Right ventricle myocardium inferior (tissue), 1 donor: ENCODE measurements at regions of chr1 and their contacts with region 1.

Region 1: DNA sequence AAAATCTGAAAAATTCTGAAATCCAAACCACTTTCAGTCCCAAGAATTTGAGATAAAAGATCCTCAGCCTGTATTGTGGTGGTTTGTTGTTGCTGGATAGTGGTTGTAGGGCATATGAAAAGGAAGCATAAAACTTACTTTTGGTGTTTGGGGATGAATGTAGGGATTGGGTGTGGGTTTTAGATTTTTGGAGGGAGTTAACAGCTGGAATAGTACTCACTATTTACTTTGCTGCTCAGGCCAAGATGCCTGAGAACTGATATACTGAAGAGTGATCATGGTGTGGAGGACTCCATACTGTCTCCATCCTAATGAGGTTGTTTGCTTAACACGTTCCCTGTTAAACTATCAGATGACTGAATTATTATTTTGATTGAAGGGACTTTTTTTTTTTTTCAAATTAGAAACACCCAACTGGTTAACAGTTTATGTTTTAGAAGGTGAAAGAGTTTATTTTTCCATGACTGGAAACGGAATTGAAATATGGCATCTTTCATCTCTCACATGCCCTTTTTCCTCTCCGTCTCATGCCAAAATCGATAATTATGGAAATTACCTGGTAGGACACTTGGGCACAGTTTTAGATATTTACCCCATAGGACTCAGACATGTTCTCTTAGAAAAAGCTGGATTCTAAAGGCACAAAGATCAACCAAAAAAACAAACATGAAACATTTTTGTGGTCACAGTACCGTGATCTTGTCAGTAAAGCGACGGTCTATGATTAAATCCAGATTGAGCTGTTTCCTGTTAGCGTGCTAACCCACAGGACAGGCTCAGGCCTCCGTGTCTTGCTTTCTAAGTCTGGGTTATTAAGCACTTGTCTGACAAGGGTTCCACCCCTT is 37.3 kb downstream of the RGL1 start:
- DNase-seq: no peak
- ATAC-seq: peak; percentile 86

Region 2: DNA sequence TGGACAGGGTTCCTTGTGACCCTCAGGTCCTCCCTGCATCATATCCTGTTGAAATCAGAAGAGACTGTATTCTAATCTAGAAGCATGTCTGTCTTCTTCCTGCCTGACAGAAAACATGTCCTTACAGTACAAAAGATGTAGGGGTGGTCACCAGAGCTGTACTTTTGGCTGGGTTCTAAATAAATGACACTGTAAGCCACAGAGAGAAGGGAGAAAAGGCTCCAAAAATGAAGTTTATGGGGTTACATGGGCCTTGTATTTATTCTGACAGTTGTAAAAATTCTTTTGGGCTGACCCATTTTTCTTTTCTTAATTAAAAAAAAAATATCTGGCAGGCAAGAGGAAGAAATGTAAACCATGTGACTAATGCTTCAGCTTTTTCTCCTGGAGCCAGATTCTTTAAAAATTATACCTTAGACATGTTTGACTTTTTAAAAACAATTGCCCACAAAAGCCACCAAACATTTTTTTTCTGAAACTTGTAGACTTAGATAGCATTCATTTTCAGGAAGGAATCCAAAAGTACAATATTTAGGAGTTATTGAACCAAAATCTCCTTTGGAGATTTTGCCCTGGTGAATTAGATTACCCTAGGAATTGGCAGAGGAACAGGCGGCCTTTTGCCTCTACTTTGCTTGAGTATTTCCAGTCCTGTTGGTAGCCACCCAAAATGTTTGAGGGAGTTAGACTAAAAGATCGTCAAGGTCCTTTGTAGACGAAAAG is 20.1 kb before region 1 on chr1:
- intact Hi-C with region 1: loop called (anchors 2 kb)
- DNase-seq: no peak
- ATAC-seq: peak; percentile 65

Region 3: GRCh38 chr1:183891158-183891856 is 49.1 kb after region 1 on chr1:
- intact Hi-C with region 1: no loop called
- DNase-seq: no peak
- ATAC-seq: no peak